ENCODE measurements at regions of chr16 and their contacts with region 1.

Region 1: GRCh38 chr16:19382887-19383816 is 34.5 kb upstream of the TMC5 start:
- DNase-seq: no peak
- H3K4me3 ChIP-seq: no peak overlapping the region
- H3K27ac ChIP-seq: no peak overlapping the region
- H3K4me1 ChIP-seq: no peaks in the 10 kb centered on the region
- H3K27me3 ChIP-seq: no peaks in the 10 kb centered on the region
- CTCF ChIP-seq: no peak

Region 2: DNA sequence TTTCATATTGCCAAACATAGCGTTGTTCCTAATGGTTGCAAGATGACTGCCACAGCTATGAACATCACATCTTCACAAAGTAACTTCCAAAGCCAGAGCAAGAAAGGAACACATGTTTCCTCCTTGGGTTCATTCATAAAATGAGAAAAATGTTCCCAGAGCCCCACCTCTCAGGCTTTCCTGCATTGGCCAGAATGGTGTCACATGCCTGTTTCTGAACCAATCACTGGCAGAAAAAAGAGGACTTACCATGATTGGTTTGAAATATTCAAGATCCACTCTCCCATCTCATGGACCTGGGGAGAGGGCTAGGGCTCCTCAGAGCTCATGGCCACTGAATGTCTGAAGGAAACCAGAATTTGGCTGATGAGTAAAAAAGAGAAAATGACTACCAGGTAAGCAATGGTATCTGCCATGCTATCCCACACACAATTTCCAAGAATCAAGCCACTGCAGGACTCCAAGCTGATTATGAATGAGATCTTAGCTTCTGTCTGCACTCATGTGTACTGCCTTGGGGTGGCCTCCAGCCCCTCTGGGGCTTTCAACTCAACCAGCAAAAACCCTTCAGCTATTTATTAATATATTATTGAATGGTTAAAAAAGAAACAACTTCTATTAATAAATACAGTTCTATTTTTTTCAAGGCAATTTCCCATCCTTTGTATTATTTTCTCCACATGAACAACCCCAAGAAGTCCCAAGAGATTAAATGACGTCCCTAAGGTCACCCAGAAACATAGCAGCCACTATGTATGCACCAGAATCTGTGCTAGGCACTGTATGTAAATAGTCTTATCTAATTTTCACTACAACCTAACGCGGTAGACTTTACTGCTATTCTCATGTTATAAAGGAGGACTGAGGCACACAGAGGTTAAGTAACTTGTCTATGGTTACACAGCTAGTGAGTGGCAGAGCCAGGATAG is 26.9 kb before region 1 on chr16:
- CTCF ChIA-PET with region 1: no interaction called
- POLR2A ChIA-PET with region 1: interaction called, 10 read pairs
- intact Hi-C with region 1: no loop called
- DNase-seq: no peak
- H3K4me3 ChIP-seq: no peak overlapping the region
- H3K27ac ChIP-seq: no peak overlapping the region
- H3K4me1 ChIP-seq: no peaks in the 10 kb centered on the region
- H3K27me3 ChIP-seq: no peaks in the 10 kb centered on the region
- CTCF ChIP-seq: no peak